WTC11 (cell line): ENCODE measurements at regions of chr15 and their contacts with region 1.

Region 1: GRCh38 chr15:23574742-23575141 is 9.3 kb downstream of the MKRN3 start:
- DNase-seq: peak; percentile 10
- ATAC-seq: peak; percentile 73; the same call in 1 of the 2 replicates
- H3K4me3 Mint-ChIP-seq: no peak overlapping the region
- H3K27ac Mint-ChIP-seq: no peak overlapping the region
- H3K4me1 Mint-ChIP-seq: peaks cover 8% of the 10 kb centered on the region
- H3K27me3 Mint-ChIP-seq: no peaks in the 10 kb centered on the region; the same call in 1 of the 2 replicates
- CTCF ChIP-seq: no peak

Region 2: DNA sequence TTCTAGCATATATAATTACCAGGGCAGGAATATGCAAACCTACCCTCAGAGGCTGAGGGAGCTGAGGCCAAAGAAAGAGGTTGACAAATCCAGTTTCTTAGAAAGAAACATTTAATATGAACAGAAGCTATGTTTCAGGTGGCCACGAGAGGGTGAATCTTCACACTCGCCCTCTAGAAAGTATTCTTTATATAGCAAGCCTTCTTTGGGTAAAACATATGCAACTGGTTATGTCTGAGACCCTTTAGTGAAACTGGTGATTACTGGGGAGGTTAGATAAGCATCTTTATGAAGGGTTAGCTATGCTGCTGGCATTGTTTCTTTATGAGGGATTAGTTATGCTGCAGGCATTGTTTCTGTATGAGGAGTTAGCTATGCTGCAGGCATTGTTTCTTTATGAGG is 77.0 kb before region 1 on chr15:
- CTCF ChIA-PET with region 1: interaction called, 23 read pairs
- POLR2A ChIA-PET with region 1: no interaction called
- DNase-seq: no peak
- ATAC-seq: no peak
- H3K4me3 Mint-ChIP-seq: no peak overlapping the region
- H3K27ac Mint-ChIP-seq: no peak overlapping the region
- H3K4me1 Mint-ChIP-seq: 0 out of 2 replicates have a peak, but pooled peaks cover under 1% of the 10 kb centered on the region
- H3K27me3 Mint-ChIP-seq: peaks cover 48% of the 10 kb centered on the region
- CTCF ChIP-seq: no peak